Cardiac septum (tissue), 1 donor: ENCODE measurements at regions of chr6 and their contacts with region 1.

Region 1: GRCh38 chr6:109526905-109527628 is 44.0 kb upstream of the ZBTB24 start:
- DNase-seq: no peak

Region 2: DNA sequence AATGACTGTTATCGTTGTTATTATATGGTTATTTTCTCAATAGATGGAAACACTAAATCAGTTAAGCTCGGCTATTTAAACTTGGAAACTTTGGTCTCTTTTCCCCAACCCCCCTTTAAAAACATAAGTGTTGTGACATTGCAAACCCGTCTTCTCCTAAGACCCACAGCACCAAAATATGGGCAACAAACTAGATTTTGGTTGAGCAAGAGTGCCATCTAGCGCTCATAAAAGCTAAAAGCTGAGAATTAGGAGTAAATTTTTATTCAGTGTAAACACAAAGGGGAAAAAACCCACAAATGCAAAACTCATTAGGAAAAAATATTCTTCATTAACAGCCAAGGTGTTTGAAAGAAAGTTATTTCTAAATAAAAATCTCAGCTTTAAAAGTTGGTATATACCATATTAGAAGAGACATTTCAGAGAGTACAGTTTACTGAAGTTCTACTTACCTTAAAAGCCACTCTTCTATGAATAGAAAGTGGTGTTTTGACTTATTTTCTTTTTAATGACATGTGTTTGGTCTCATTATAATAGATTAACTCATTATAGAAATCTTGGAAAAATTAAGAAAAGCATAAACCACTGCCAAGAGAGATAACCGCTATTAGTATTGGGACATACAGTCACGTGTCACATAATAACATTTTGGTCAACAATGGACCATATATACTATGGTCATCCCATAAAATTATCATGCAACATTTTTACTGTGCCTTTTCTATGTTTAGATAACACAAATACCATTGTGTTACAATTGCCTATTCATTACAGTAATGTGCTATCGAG is 453.5 kb before region 1 on chr6:
- intact Hi-C with region 1: no loop called
- DNase-seq: no peak

Region 3: DNA sequence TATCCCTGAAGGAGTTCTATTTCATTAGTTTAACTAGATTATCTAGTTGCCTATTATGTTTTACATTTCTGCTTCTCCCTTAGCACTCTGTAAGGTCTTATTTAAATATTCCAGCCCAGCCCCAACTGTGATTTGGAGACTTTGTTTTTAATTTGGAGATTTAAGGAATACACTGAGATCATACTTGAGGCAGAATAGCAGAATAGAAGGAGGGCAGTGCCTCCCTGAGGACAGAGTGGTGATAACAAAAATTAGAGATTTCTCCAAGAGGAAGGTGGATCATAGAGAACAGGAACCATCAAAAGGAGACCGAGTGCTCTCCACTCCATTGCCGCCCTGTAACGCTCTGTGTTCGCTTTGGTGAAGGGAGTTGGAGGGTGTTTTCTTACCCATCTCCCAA is 130.0 kb before region 1 on chr6:
- intact Hi-C with region 1: no loop called
- DNase-seq: no peak

Region 4: DNA sequence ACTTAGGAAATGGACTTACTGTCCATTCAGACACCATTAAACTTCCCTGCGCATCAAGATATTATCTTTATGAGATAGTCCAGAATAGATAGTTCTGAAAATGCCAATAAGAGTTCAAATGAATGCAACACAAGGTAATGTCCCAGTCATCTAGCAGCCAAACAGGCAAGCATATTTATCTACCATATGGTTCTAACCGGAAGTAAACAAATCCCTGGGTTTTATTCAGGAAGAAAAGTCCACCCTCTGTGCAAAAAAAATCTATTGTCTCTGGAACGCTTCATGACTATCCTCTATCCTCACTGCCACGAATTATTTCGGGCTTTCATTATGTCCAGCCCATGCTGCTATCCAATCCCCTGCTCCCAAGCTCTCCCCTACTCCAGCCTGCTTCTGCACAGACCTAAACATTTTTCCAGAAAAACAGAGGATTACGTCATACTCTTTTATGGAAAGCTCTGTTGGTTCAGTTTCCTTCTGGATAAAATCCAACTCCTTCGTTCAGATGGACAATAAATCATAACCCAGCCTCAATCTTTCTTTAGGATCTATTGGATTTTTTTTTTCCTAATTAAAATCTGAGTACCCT is 98.1 kb before region 1 on chr6:
- intact Hi-C with region 1: no loop called
- DNase-seq: no peak

Region 5: DNA sequence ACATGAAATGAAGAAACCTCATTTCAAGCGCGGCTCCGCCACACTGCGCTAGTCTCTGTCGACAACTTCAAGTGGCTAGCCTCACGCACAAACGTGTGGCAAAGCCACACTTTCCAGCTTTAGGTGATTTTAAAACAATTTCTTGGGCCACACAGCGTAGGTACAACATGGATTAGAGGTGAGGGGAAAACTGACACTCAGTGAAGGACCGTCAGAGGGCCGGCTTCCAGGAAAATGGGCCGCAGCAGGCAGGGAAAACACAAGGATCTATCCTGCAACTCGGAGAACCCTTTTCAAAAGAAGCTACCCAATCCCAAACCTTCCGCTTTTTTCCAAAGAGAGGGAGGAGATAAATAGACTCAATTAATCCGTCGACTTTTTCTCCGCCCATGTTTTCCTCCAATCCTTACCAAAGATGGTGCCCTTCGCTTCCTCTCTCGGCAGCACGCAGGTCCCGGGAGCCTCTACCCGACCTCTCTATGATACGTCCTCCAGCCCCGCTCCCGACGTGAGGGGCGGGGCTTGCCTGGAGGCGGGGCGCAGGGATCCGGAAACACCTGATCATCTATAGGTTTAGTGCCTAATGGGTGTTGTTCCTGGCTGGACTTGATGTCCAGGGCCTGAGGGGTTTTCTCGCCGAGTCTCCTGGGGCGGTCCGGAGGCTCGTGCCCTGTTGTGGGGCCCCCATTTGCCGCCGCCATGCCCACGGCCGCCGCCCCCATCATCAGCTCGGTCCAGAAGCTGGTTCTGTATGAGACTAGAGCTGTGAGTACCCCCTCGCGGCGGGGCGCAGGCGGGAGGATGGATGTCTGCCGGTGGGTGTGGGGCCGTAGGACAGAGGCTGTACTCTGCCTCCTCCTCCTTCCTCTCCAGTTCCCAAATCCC is 163.9 kb after region 1 on chr6 and contains the starts of genes AK9 and FIG4:
- intact Hi-C with region 1: loop called (anchors 10 kb)
- DNase-seq: peak; percentile 97
- total RNA-seq, gene AK9: 8.3 TPM
- total RNA-seq, gene FIG4: 9.4 TPM

Region 6: GRCh38 chr6:110053395-110054240 is 526.6 kb after region 1 on chr6:
- intact Hi-C with region 1: loop called (anchors 5 kb)
- DNase-seq: no peak